K562 (cell line): ENCODE measurements at regions of chr15 and their contacts with region 1.

Region 1: GRCh38 chr15:41811432-41812195 is 16.3 kb upstream of the JMJD7 start:
- DNase-seq: peak; percentile 85
- ATAC-seq: peak; percentile 98
- H3K4me3 ChIP-seq: no peak overlapping the region
- H3K27ac ChIP-seq: no peak overlapping the region
- H3K4me1 ChIP-seq: peaks cover 3 to 4% of the 10 kb centered on the region in 2 experiments; a peak in 3 of 5 replicates
- H3K27me3 ChIP-seq: no peaks in the 10 kb centered on the region
- CTCF ChIP-seq: peak; percentile 93 to 96 (median 96)
- EP300 ChIP-seq: no peak
- POLR2A ChIP-seq: no peak
- RAD21 ChIP-seq: peak; percentile 93 to 97

Region 2: GRCh38 chr15:41557673-41558399 is 253.8 kb before region 1 on chr15:
- CTCF ChIA-PET with region 1: interaction called, 6 read pairs
- POLR2A ChIA-PET with region 1: no interaction called
- in situ Hi-C with region 1: no loop called
- intact Hi-C with region 1: loop called (anchors 1 kb)
- DNase-seq: peak; percentile 79 to 84 (median 81)
- ATAC-seq: peak; percentile 77
- H3K4me3 ChIP-seq: peak overlapping the region; percentile 81
- H3K27ac ChIP-seq: 0 out of 3 replicates have a peak overlapping the region, but pooled peaks have one; percentile 12
- H3K4me1 ChIP-seq: peaks cover 38 to 53% of the 10 kb centered on the region in 2 experiments
- H3K27me3 ChIP-seq: no peaks in the 10 kb centered on the region
- CTCF ChIP-seq: peak; percentile 90 to 96 (median 91)
- EP300 ChIP-seq: 0 out of 2 replicates have a peak, but pooled peaks have one; percentile 6
- POLR2A ChIP-seq: no peak
- RAD21 ChIP-seq: peak; percentile 76 to 79

Region 3: GRCh38 chr15:41603941-41604911 is 207.4 kb before region 1 on chr15:
- CTCF ChIA-PET with region 1: interaction called, 3 read pairs
- POLR2A ChIA-PET with region 1: no interaction called
- in situ Hi-C with region 1: loop called (anchors 10 kb)
- intact Hi-C with region 1: loop called (anchors 1 kb)
- DNase-seq: peak; percentile 63 to 65 (median 64)
- ATAC-seq: peak; percentile 93
- H3K4me3 ChIP-seq: no peak overlapping the region
- H3K27ac ChIP-seq: no peak overlapping the region
- H3K4me1 ChIP-seq: peaks cover 0 to 16% of the 10 kb centered on the region in 2 experiments; a peak in 3 of 5 replicates
- H3K27me3 ChIP-seq: peaks cover 0 to 7% of the 10 kb centered on the region in 2 experiments; a peak in 3 of 5 replicates
- CTCF ChIP-seq: peak; percentile 70 to 83 (median 71)
- EP300 ChIP-seq: no peak
- POLR2A ChIP-seq: no peak
- RAD21 ChIP-seq: peak; percentile 58 to 59; a peak in 3 of 4 replicates

Region 4: GRCh38 chr15:41713047-41713446 is 98.6 kb before region 1 on chr15:
- CTCF ChIA-PET with region 1: no interaction called
- POLR2A ChIA-PET with region 1: no interaction called
- in situ Hi-C with region 1: no loop called
- intact Hi-C with region 1: no loop called
- DNase-seq: no peak
- ATAC-seq: no peak
- H3K4me3 ChIP-seq: no peak overlapping the region
- H3K27ac ChIP-seq: no peak overlapping the region
- H3K4me1 ChIP-seq: no peaks in the 10 kb centered on the region
- H3K27me3 ChIP-seq: no peaks in the 10 kb centered on the region
- CTCF ChIP-seq: no peak
- EP300 ChIP-seq: no peak
- POLR2A ChIP-seq: no peak
- RAD21 ChIP-seq: no peak

Region 5: DNA sequence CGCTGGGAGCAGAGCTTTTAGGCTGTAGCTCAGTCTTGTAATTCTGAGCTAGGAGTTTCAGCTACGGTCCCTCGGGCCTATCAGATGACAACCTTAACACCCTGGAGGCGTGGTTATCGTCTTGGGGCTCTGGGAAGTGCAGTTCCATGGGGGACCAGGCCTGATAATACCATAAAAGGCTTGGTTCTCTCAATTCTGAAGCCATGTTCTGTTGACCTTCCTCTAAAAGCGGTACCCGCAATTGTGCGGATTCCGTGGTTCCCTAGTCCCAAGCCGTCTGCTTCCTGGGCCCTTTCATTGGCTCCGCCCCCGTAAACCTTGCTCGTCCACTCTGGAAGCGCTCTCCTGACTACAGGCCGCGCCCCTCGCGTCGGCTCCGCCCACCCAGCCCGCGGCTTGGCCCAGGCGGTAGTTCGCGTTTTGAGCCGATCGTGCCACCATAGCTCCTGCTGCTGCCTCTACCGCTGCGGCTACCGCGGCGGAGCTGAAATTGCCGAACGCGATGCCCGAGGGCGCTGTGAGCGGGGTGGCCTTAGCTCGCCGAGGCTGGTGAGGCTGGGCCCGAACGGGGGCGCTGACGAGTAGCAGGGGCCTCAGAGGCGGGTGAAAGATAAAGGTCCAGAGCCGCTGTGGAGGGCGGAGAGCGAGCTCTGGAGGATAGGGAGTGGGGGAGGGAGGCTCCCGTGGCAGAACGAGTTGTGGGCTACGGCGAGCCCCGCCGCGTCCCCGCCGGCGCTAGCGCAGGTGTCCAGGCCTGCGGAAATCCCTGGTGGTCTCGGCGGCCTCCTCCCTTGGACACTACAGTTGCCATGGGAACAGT is 37.3 kb before region 1 on chr15 and contains the start of gene MAPKBP1:
- CTCF ChIA-PET with region 1: interaction called, 98 read pairs
- POLR2A ChIA-PET with region 1: interaction called, 15 read pairs
- in situ Hi-C with region 1: loop called (anchors 5 kb)
- intact Hi-C with region 1: loop called (anchors 1 kb)
- DNase-seq: peak; percentile 95 to 98 (median 97)
- ATAC-seq: peak; percentile 96
- H3K4me3 ChIP-seq: peak within 1 kb of the TSS; percentile 54
- H3K27ac ChIP-seq: peak within 1 kb of the TSS; percentile 70
- H3K4me1 ChIP-seq: peaks cover 12 to 31% of the 10 kb centered on the region in 2 experiments
- H3K27me3 ChIP-seq: no peaks in the 10 kb centered on the region; a peak in 1 of 5 replicates
- CTCF ChIP-seq: peak; percentile 89 to 99 (median 99)
- EP300 ChIP-seq: 0 out of 2 replicates have a peak, but pooled peaks have one; percentile 4
- POLR2A ChIP-seq: peak; percentile 78; the same call in 1 of the 2 replicates
- RAD21 ChIP-seq: peak; percentile 60 to 78; a peak in 3 of 4 replicates
- polyA plus RNA-seq, gene MAPKBP1: 0.15 to 0.28 TPM